Caco-2 (cell line): ENCODE measurements at regions of chr4 and their contacts with region 1.

Region 1: GRCh38 chr4:129362674-129363274 is 266.8 kb downstream of the C4orf33 start:
- DNase-seq: peak; percentile 46 to 61
- H3K4me3 ChIP-seq: no peak overlapping the region
- H3K4me3 Mint-ChIP-seq: no peak overlapping the region
- H3K27ac Mint-ChIP-seq: no peak overlapping the region
- H3K4me1 ChIP-seq: no peaks in the 10 kb centered on the region
- H3K4me1 Mint-ChIP-seq: peaks cover 3% of the 10 kb centered on the region
- H3K27me3 ChIP-seq: peaks cover 1% of the 10 kb centered on the region; the same call in 1 of the 2 replicates
- H3K27me3 Mint-ChIP-seq: no peaks in the 10 kb centered on the region
- CTCF ChIP-seq: peak; percentile 70 to 75

Region 2: DNA sequence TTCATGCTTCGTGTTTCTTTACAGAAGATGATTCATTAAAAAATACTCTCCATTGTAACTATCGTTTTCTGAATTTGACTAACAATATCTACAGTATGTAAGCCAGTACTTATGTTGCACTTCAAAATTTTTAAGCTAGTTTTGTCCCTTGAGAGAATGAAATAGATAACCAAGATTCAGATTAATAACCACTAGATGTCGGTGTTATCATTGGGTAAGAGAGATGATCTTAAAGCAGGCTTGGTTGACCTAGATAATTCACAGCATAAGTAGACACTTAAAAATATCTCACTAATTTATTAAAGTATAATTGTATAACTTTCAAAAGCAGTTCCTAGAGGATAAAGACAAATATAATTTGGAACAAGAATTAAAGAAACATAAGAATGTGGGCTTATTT is 164.0 kb after region 1 on chr4:
- CTCF ChIA-PET with region 1: no interaction called
- POLR2A ChIA-PET with region 1: no interaction called
- intact Hi-C with region 1: loop called (anchors 10 kb)
- DNase-seq: no peak
- H3K4me3 ChIP-seq: no peak overlapping the region
- H3K4me3 Mint-ChIP-seq: no peak overlapping the region
- H3K27ac Mint-ChIP-seq: no peak overlapping the region
- H3K4me1 ChIP-seq: no peaks in the 10 kb centered on the region
- H3K4me1 Mint-ChIP-seq: no peaks in the 10 kb centered on the region
- H3K27me3 ChIP-seq: no peaks in the 10 kb centered on the region; the same call in 1 of the 2 replicates
- H3K27me3 Mint-ChIP-seq: peaks cover 11% of the 10 kb centered on the region
- CTCF ChIP-seq: peak in 1 of 2 experiments; percentile 12

Region 3: DNA sequence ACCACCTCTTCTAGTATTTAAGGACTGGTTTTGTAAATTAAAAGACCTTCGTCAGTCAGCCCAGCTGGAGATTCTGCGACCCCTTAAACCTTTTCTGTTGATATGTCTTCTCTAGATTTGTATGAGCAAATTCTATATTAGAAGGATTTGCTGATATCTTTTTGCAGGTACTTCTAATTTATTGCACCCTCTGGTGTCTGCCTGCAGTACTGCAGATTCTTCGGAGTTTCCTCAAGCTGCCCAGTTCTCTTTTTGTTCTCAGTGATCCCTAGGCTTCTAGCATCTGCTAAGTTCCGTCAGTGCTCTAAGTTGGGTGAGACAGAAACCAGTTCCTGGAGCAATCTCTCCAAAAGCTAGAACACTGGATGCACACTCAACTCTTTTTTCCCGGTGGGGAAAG is 278.4 kb after region 1 on chr4:
- CTCF ChIA-PET with region 1: interaction called, 14 read pairs
- POLR2A ChIA-PET with region 1: no interaction called
- intact Hi-C with region 1: loop called (anchors 1 kb)
- DNase-seq: peak; percentile 38 to 65
- H3K4me3 ChIP-seq: no peak overlapping the region
- H3K4me3 Mint-ChIP-seq: no peak overlapping the region
- H3K27ac Mint-ChIP-seq: no peak overlapping the region
- H3K4me1 ChIP-seq: no peaks in the 10 kb centered on the region
- H3K4me1 Mint-ChIP-seq: no peaks in the 10 kb centered on the region
- H3K27me3 ChIP-seq: no peaks in the 10 kb centered on the region
- H3K27me3 Mint-ChIP-seq: no peaks in the 10 kb centered on the region
- CTCF ChIP-seq: peak; percentile 75 to 79

Region 4: GRCh38 chr4:129783596-129783995 is 420.8 kb after region 1 on chr4:
- CTCF ChIA-PET with region 1: no interaction called
- POLR2A ChIA-PET with region 1: no interaction called
- intact Hi-C with region 1: no loop called
- DNase-seq: no peak
- H3K4me3 ChIP-seq: no peak overlapping the region
- H3K4me3 Mint-ChIP-seq: no peak overlapping the region
- H3K27ac Mint-ChIP-seq: no peak overlapping the region
- H3K4me1 ChIP-seq: no peaks in the 10 kb centered on the region
- H3K4me1 Mint-ChIP-seq: no peaks in the 10 kb centered on the region
- H3K27me3 ChIP-seq: no peaks in the 10 kb centered on the region
- H3K27me3 Mint-ChIP-seq: no peaks in the 10 kb centered on the region
- CTCF ChIP-seq: no peak

Region 5: GRCh38 chr4:130359542-130359941 is 996.8 kb after region 1 on chr4:
- CTCF ChIA-PET with region 1: no interaction called
- POLR2A ChIA-PET with region 1: no interaction called
- intact Hi-C with region 1: loop called (anchors 10 kb)
- DNase-seq: no peak
- H3K4me3 ChIP-seq: no peak overlapping the region
- H3K4me3 Mint-ChIP-seq: no peak overlapping the region
- H3K27ac Mint-ChIP-seq: no peak overlapping the region
- H3K4me1 ChIP-seq: no peaks in the 10 kb centered on the region
- H3K4me1 Mint-ChIP-seq: no peaks in the 10 kb centered on the region
- H3K27me3 ChIP-seq: no peaks in the 10 kb centered on the region
- H3K27me3 Mint-ChIP-seq: peaks cover 3% of the 10 kb centered on the region
- CTCF ChIP-seq: peak; percentile 11 to 30